Heart left ventricle (tissue), 16 donors: ENCODE measurements at regions of chr14 and their contacts with region 1.

Region 1: GRCh38 chr14:64671591-64671990 is 32.6 kb upstream of the PLEKHG3 start:
- DNase-seq: no peak
- ATAC-seq: peak in 3 of 4 donors; percentile 55 to 71 (median 65)
- H3K4me3 ChIP-seq: no peak overlapping the region
- H3K27ac ChIP-seq: no peak overlapping the region
- H3K4me1 ChIP-seq: peaks cover 0 to 30% (median 3%) of the 10 kb centered on the region in 12 donors
- H3K27me3 ChIP-seq: no peaks in the 10 kb centered on the region
- CTCF ChIP-seq: peak; percentile 51 to 84 (median 70)
- POLR2A ChIP-seq: no peak

Region 2: DNA sequence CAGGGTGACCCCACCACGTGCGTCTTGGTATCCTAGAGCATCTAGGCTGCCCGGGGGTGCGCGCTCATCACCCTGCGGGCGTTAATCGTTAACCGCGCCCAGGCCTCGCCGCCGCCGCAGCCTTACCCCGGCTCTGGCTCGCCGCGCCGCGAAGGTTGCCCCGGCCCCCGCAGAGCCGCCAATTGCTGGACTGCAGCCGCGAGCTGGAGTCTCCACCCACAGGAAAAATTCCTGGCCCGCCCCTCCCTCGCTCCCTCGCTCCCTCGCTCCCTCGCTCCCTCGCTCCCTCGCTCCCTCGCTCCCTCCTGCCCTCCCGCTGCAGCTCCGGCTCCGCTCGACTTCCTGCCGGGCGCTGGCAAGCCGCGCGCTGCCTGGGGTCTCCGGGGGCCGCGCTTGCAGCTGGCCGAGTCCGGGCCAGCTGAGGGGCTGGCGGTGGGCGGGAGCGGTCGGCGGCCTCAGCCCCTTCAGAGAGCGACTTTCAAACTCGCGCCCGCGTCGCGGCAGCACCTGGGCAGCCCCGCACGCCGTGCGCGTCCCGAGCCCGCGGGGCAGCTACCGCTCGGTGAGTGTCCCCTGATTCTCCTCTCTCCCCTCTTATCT is 32.7 kb after region 1 on chr14 and contains the start of gene PLEKHG3:
- intact Hi-C with region 1: loop called in 1 of 10 experiments (anchors 5 kb)
- DNase-seq: peak; percentile 87 to 91 (median 89)
- ATAC-seq: peak; percentile 18 to 86 (median 76)
- H3K4me3 ChIP-seq: peak within 1 kb of the TSS; percentile 58 to 90 (median 84)
- H3K27ac ChIP-seq: peak within 1 kb of the TSS; percentile 42 to 92 (median 85)
- H3K4me1 ChIP-seq: peaks cover 0 to 65% (median 32%) of the 10 kb centered on the region in 12 donors
- H3K27me3 ChIP-seq: peaks cover 0 to 18% (median 0%) of the 10 kb centered on the region in 9 donors
- CTCF ChIP-seq: peak in 3 of 12 donors; percentile 26 to 31 (median 27)
- POLR2A ChIP-seq: peak in 1 of 2 donors; percentile 50
- total RNA-seq, gene PLEKHG3: 14.7 to 34.3 (median 18.1) TPM

Region 3: DNA sequence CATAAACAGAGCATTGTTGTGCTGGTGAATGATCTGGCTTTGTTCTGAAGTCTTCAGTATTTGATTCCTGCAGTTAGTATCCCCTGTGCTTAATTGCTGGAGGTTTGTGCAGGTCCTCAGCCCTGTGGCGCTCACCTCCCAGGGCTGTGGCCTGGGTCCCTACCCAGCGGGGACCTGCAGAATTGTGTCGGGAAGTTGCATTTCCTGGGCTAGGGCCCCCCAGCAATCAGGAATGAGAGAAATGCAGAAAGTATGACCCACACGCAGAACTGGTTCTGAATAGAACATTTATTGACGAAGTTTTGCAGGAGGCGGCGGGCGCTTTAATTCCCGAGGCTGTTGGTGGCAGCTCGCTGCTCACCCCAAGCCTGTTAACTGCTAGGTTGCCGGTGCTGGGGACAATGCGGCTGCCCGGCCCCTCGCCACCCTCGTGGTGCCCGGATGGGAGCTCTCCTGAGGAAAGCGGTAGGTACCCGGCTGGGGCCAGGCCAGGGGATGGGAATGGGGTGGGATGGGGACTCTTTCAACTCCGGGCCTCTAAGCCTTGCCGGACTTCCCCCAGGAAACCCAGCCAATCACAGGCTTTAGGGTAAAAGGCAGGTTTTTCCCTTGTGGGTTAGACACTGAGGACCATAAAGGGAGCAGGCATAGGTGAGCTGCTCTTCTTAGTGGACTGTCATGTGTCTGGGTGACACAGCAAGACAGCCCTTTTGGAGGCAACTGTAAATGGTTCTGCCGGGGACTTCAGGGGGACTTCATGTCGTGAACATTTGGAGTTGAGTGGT is 44.2 kb after region 1 on chr14:
- intact Hi-C with region 1: loop called in 1 of 10 experiments (anchors 5 kb)
- DNase-seq: peak in 2 of 5 donors; percentile 38 to 59
- ATAC-seq: peak; percentile 21 to 66 (median 46)
- H3K4me3 ChIP-seq: peak overlapping the region in 11 of 12 donors; percentile 0 to 52 (median 42)
- H3K27ac ChIP-seq: peak overlapping the region in 10 of 12 donors; percentile 38 to 84 (median 62)
- H3K4me1 ChIP-seq: peaks cover 0 to 81% (median 38%) of the 10 kb centered on the region in 12 donors
- H3K27me3 ChIP-seq: no peaks in the 10 kb centered on the region
- CTCF ChIP-seq: no peak
- POLR2A ChIP-seq: no peak

Region 4: GRCh38 chr14:64764641-64765520 is 93.3 kb after region 1 on chr14:
- intact Hi-C with region 1: loop called (anchors 1 to 5 kb)
- DNase-seq: peak; percentile 68 to 83 (median 74)
- ATAC-seq: peak in 3 of 4 donors; percentile 54 to 66 (median 65)
- H3K4me3 ChIP-seq: peak overlapping the region in 7 of 12 donors; percentile 27 to 45 (median 33)
- H3K27ac ChIP-seq: peak overlapping the region in 9 of 12 donors; percentile 16 to 87 (median 78)
- H3K4me1 ChIP-seq: peaks cover 0 to 48% (median 39%) of the 10 kb centered on the region in 12 donors
- H3K27me3 ChIP-seq: no peaks in the 10 kb centered on the region
- CTCF ChIP-seq: peak; percentile 68 to 95 (median 86)
- POLR2A ChIP-seq: no peak

Region 5: GRCh38 chr14:64880221-64881121 is 208.9 kb after region 1 on chr14:
- intact Hi-C with region 1: loop called in 5 of 10 experiments (anchors 10 kb)
- DNase-seq: peak; percentile 43 to 67 (median 58)
- ATAC-seq: peak; percentile 56 to 72 (median 68)
- H3K4me3 ChIP-seq: peak overlapping the region; percentile 56 to 78 (median 66)
- H3K27ac ChIP-seq: peak overlapping the region; percentile 32 to 95 (median 89)
- H3K4me1 ChIP-seq: peaks cover 0 to 32% (median 11%) of the 10 kb centered on the region in 12 donors
- H3K27me3 ChIP-seq: peaks cover 0 to 56% (median 14%) of the 10 kb centered on the region in 9 donors
- CTCF ChIP-seq: no peak
- POLR2A ChIP-seq: no peak

Region 6: GRCh38 chr14:64891839-64892375 is 220.3 kb after region 1 on chr14:
- intact Hi-C with region 1: loop called in 8 of 10 experiments (anchors 5 to 10 kb)
- DNase-seq: peak in 1 of 5 donors; percentile 12
- ATAC-seq: peak in 3 of 4 donors; percentile 76 to 81 (median 79)
- H3K4me3 ChIP-seq: no peak overlapping the region
- H3K27ac ChIP-seq: no peak overlapping the region
- H3K4me1 ChIP-seq: no peaks in the 10 kb centered on the region
- H3K27me3 ChIP-seq: peaks cover 0 to 10% (median 0%) of the 10 kb centered on the region in 9 donors
- CTCF ChIP-seq: peak; percentile 33 to 72 (median 58)
- POLR2A ChIP-seq: no peak

Region 7: GRCh38 chr14:64899958-64900357 is 228.4 kb after region 1 on chr14:
- intact Hi-C with region 1: loop called in 4 of 10 experiments (anchors 5 to 10 kb)
- DNase-seq: no peak
- ATAC-seq: no peak
- H3K4me3 ChIP-seq: no peak overlapping the region
- H3K27ac ChIP-seq: no peak overlapping the region
- H3K4me1 ChIP-seq: no peaks in the 10 kb centered on the region
- H3K27me3 ChIP-seq: peaks cover 0 to 11% (median 0%) of the 10 kb centered on the region in 9 donors
- CTCF ChIP-seq: no peak
- POLR2A ChIP-seq: no peak